Heart right ventricle (tissue), 16 donors: ENCODE measurements at regions of chr7 and their contacts with region 1.

Region 1: GRCh38 chr7:39248041-39248691 is 270.5 kb downstream of the POU6F2 start:
- DNase-seq: no peak
- ATAC-seq: no peak
- H3K4me3 ChIP-seq: no peak overlapping the region
- H3K27ac ChIP-seq: no peak overlapping the region
- H3K4me1 ChIP-seq: no peaks in the 10 kb centered on the region
- H3K27me3 ChIP-seq: peaks cover 0 to 19% (median 2%) of the 10 kb centered on the region in 7 donors
- CTCF ChIP-seq: no peak

Region 2: GRCh38 chr7:39294022-39294421 is 45.9 kb after region 1 on chr7:
- intact Hi-C with region 1: loop called in 1 of 10 experiments (anchors 1 kb)
- DNase-seq: no peak
- ATAC-seq: no peak
- H3K4me3 ChIP-seq: no peak overlapping the region
- H3K27ac ChIP-seq: no peak overlapping the region
- H3K4me1 ChIP-seq: no peaks in the 10 kb centered on the region
- H3K27me3 ChIP-seq: peaks cover 0 to 6% (median 0%) of the 10 kb centered on the region in 7 donors
- CTCF ChIP-seq: no peak

Region 3: DNA sequence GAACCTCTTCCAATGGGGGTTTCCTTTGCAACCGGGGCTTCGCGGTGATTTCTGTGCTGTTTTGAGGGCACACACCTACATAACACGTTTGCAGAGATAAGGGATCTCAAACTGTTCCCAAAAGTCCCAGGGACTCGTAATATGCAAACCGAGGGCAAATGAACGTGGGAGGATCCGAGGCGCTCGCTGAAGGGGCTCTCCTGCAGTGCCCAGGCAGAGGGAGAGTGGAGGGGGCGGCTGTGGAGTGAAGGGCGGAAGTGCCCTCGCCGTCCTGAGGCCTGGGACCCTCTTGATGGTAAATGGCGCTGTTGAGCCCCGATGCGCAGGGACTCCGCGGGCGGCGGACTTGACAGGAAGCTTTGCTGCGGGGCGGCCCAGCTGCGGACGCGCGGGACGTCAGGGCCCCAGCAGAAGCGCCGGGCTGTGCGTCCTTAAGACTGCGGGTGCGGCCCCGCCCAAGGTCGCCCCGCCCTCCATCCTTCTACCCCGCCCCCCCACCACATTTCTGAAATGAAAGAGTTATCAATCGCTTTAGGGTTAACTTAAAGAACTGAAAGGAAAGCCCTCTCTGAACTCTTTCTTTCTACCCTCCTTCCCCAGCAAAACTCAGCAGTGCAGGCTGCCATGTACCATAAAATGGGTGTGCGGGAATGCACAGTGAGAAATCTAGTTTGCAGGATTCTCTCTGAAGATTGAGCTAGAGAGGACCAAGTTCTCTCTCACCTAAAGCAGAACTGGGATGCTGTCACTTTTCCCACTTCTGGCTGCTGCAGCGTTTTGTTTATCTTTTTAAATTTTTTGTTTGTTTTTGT is 166.3 kb after region 1 on chr7:
- intact Hi-C with region 1: no loop called
- DNase-seq: peak; percentile 18 to 43
- ATAC-seq: peak; percentile 65 to 90 (median 72)
- H3K4me3 ChIP-seq: peak overlapping the region; percentile 47 to 62 (median 54)
- H3K27ac ChIP-seq: no peak overlapping the region
- H3K4me1 ChIP-seq: peaks cover 0 to 14% (median 5%) of the 10 kb centered on the region in 9 donors
- H3K27me3 ChIP-seq: peaks cover 0 to 38% (median 32%) of the 10 kb centered on the region in 7 donors
- CTCF ChIP-seq: no peak